Gastrocnemius medialis (tissue), 4 donors: ENCODE measurements at regions of chr16 and their contacts with region 1.

Region 1: GRCh38 chr16:4517812-4518680 is 20.5 kb downstream of the CDIP1 start:
- DNase-seq: no peak
- ATAC-seq: no peak
- H3K4me3 ChIP-seq: no peak overlapping the region
- H3K27ac ChIP-seq: no peak overlapping the region
- H3K4me1 ChIP-seq: peaks cover 29 to 69% of the 10 kb centered on the region in 2 donors
- H3K27me3 ChIP-seq: no peaks in the 10 kb centered on the region
- CTCF ChIP-seq: peak; percentile 22 to 62 (median 52)
- POLR2A ChIP-seq: no peak

Region 2: GRCh38 chr16:4489030-4489429 is 29.0 kb before region 1 on chr16:
- in situ Hi-C with region 1: no loop called
- intact Hi-C with region 1: loop called (anchors 1 kb)
- DNase-seq: no peak
- ATAC-seq: no peak
- H3K4me3 ChIP-seq: no peak overlapping the region
- H3K27ac ChIP-seq: peak overlapping the region in 2 of 4 donors; percentile 41 to 61
- H3K4me1 ChIP-seq: peaks cover 12 to 21% of the 10 kb centered on the region in 2 donors
- H3K27me3 ChIP-seq: no peaks in the 10 kb centered on the region
- CTCF ChIP-seq: no peak
- POLR2A ChIP-seq: no peak

Region 3: GRCh38 chr16:4544473-4544872 is 26.4 kb after region 1 on chr16:
- in situ Hi-C with region 1: no loop called
- intact Hi-C with region 1: loop called (anchors 1 kb)
- DNase-seq: no peak
- ATAC-seq: no peak
- H3K4me3 ChIP-seq: no peak overlapping the region
- H3K27ac ChIP-seq: no peak overlapping the region
- H3K4me1 ChIP-seq: no peaks in the 10 kb centered on the region
- H3K27me3 ChIP-seq: no peaks in the 10 kb centered on the region
- CTCF ChIP-seq: no peak
- POLR2A ChIP-seq: no peak